A549 (cell line): ENCODE measurements at regions of chr4 and their contacts with region 1.

Region 1: GRCh38 chr4:122602277-122603142 is 18.4 kb downstream of the IL21 start:
- DNase-seq: peak; percentile 9 to 52
- ATAC-seq: peak; percentile 93
- H3K4me3 ChIP-seq: peak overlapping the region; percentile 28
- H3K27ac ChIP-seq: no peak overlapping the region; a peak in 1 of 6 replicates
- H3K4me1 ChIP-seq: 0 out of 3 replicates have a peak, but pooled peaks cover 4% of the 10 kb centered on the region
- CTCF ChIP-seq: peak; percentile 57
- EP300 ChIP-seq: no peak
- POLR2A ChIP-seq: no peak
- RAD21 ChIP-seq: peak; percentile 64 to 72

Region 2: DNA sequence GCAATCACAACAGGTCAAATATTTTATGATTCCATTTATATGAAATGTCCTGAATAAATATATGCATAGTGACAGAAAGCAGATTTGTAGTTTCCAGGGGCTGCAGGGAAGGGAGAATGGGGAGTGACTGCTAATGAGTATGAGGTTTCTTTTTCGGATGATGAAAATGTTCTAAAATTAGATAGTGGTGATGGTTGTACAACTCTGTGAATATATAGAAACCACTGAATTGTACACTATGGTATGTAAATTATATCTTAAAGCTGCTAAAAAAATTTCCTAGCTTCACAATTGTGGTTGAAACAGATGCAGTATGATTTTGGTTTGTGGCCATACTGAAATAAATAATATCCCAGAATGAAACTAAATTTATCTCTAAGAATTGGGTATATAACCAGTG is 133.1 kb before region 1 on chr4:
- CTCF ChIA-PET with region 1: no interaction called
- POLR2A ChIA-PET with region 1: no interaction called
- DNase-seq: no peak
- ATAC-seq: no peak
- H3K4me3 ChIP-seq: no peak overlapping the region
- H3K27ac ChIP-seq: no peak overlapping the region
- H3K4me1 ChIP-seq: no peaks in the 10 kb centered on the region
- CTCF ChIP-seq: no peak
- EP300 ChIP-seq: no peak
- POLR2A ChIP-seq: no peak
- RAD21 ChIP-seq: no peak

Region 3: DNA sequence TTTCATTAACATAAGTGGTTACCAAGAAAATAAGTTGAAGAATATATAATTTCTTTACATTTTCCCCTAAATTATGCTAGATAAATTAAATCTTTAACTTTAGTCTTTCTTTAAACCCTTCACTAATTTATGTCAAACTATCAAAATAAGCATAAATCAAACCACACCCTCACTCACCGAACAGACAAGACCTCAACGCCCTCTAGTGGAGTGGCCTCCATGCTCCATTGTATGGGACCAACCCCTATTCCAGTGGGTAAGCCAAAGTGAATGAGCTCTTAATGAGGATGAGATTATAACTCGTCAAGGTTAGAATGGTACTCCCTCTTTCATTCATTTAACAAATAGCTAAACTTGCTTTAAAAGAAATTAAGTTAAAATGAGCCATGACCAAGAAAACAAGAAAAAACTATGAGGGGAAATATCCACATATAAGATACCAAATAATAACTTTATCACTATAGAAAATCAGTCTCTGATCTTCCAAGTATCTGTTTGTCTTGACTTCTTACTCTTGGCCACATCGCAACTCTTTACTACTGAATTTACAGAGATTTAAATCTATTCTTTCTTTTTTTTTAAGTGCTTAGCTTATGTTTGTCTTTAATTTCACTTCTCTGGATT is 114.4 kb after region 1 on chr4:
- CTCF ChIA-PET with region 1: interaction called, 22 read pairs
- POLR2A ChIA-PET with region 1: no interaction called
- DNase-seq: peak; percentile 61 to 70
- ATAC-seq: peak; percentile 89 to 96
- H3K4me3 ChIP-seq: no peak overlapping the region
- H3K27ac ChIP-seq: no peak overlapping the region
- H3K4me1 ChIP-seq: no peaks in the 10 kb centered on the region
- CTCF ChIP-seq: peak; percentile 71
- EP300 ChIP-seq: no peak
- POLR2A ChIP-seq: no peak
- RAD21 ChIP-seq: peak; percentile 63 to 70

Region 4: DNA sequence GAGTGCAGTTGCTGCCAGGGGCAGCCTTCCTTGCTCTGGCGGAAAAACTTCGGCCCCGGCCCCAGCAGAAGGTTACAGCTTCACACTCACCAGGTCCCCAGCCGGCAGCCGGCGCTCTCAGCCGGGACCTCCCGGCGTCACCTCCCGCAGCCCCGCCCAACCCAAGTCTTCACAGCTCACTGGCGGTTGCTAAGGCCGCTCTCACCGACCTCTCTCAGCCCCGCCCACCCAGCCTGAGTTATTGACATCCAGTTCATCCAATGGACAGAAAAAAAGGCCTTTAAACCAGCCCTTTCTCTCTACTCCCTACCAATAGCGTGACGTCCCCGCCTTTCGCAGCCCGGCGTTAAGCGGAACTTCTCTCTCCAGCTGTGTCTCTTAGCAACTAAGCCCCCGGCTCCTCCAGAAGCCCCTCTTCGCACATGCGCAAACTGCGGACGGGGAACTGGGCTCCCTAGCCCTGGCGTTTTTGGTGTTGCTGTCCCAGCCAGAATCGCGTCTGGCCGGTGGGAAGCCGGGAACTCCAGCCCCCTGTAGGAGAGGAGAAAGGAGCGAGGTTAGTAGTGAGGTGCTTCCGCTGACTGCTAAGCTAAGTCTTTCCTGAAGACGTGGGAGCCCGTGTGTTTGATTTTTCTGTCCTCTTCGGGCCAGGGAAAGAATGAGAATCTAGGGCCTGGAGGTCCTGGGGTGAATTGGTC is 130.0 kb after region 1 on chr4 and contains the start of gene BBS12:
- CTCF ChIA-PET with region 1: interaction called, 11 read pairs
- POLR2A ChIA-PET with region 1: no interaction called
- DNase-seq: peak; percentile 96 to 98
- ATAC-seq: peak; percentile 97 to 98
- H3K4me3 ChIP-seq: peak within 1 kb of the TSS; percentile 53
- H3K27ac ChIP-seq: peak within 1 kb of the TSS; percentile 51 to 85
- H3K4me1 ChIP-seq: peaks cover 12% of the 10 kb centered on the region; the same call in 2 of the 3 replicates
- CTCF ChIP-seq: peak; percentile 45
- EP300 ChIP-seq: no peak
- POLR2A ChIP-seq: peak; percentile 25
- RAD21 ChIP-seq: peak; percentile 42 to 50
- polyA plus RNA-seq, gene BBS12: 3.4 and 3.7 TPM in 2 replicates

Region 5: DNA sequence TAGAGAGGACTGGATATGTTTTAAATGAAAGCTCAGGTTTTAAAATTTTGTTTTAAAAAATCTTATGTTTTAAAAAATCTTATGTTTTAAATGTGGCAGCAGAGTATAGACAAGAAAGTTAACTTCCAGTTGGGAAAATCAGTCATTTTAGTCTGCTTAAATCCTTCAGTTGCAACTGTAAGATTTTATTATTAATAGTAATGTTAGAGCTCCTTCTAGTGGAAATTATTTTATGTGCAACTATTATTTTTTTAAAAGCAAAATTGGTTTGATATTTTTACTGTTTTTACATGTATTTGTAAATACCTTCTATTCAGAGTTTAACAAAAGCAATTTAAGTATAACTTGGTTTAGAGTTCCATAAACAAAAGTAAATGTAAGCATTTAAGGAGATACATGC is 328.4 kb after region 1 on chr4:
- CTCF ChIA-PET with region 1: interaction called, 32 read pairs
- POLR2A ChIA-PET with region 1: no interaction called
- DNase-seq: no peak
- ATAC-seq: no peak
- H3K4me3 ChIP-seq: no peak overlapping the region
- H3K27ac ChIP-seq: no peak overlapping the region
- H3K4me1 ChIP-seq: peaks cover 7% of the 10 kb centered on the region; the same call in 2 of the 3 replicates
- CTCF ChIP-seq: peak; percentile 51; the same call in 2 of the 3 replicates
- EP300 ChIP-seq: no peak
- POLR2A ChIP-seq: no peak
- RAD21 ChIP-seq: peak; percentile 58 to 75